AG04449 (cell line): ENCODE measurements at regions of chr19 and their contacts with region 1.

Region 1: DNA sequence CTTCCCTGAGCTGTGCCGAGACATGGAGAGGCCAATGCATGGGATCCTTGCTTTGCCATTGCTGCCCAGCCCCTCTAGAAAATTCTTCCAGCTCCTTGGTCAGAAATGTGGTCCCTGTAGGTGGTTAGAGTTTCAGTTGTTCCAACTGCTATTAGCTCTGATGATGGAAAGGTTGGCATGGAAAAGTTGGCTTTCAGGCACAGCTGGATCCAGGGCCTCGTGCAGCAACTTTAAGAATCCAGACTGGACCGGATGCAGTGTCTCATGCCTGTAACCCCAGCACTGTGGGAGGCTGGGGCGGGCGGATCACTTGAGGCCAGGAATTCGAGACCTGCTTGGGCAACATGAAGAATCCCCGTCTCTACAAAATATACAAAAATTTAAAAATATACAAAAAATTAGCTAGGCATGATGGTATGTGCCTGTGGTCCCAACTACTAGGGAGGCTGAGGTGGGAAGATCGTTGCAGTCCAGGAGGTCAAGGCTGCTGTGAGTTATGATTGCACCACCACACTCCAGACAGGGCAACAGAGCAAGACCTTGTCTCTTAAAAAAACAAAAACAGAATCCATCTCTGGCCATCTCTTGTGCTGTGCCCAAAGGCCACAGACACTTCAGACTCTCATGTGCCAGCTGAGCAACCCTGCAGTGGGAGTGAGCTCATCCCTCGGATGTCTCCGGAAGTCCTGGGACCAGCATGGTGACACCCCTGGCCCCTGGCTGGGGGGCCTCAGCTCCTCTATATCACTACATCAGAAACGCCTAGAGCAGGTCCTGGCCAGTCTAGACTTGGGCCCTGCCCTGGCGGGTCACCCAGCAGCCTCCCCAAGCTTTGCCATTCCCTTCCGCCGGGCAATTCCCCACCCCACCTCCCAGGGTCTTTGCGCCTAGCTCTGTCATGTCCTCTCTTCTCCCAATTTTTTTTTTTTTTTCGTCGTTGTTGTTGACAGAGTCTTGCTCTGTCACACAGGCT is 16.8 kb downstream of the MEX3D start:
- DNase-seq: no peak
- H3K4me3 ChIP-seq: no peak overlapping the region
- CTCF ChIP-seq: no peak

Region 2: GRCh38 chr19:1521636-1522035 is 29.7 kb before region 1 on chr19:
- CTCF ChIA-PET with region 1: interaction called, 15 read pairs
- POLR2A ChIA-PET with region 1: no interaction called
- DNase-seq: no peak
- H3K4me3 ChIP-seq: no peak overlapping the region
- CTCF ChIP-seq: no peak

Region 3: DNA sequence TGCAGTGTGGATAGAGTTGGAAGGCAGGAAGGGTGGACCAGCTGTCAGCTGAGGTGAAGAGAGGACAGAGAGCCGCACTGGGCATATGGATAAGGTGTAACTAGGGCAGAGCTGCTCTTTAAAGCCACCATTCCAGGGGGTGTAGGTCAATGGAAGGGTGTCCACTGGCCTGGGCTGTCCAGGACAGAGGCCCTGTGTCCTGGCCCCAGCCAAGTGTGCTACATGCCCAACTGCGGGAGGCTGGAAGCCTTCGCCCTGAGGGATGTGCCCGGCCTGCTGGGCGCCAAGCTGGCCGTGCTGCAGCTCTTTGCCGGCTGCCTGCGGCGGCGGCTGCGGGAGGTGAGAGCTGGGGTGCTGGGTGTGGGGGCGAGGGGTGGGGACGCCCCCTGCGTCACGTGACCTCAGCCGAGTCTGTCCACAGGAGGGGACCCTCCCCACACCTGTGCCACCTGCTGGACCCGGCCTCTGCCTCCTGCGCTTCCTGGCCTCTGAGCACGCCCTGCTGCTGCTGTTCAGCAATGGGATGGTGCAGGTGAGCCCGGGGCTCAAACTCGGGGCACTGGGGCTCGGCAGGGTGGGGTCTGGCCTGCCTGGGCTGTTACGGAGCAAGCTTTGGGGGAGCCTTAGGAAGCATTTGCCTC is 17.7 kb before region 1 on chr19:
- CTCF ChIA-PET with region 1: interaction called, 22 read pairs
- POLR2A ChIA-PET with region 1: no interaction called
- DNase-seq: no peak
- H3K4me3 ChIP-seq: no peak overlapping the region
- CTCF ChIP-seq: no peak

Region 4: DNA sequence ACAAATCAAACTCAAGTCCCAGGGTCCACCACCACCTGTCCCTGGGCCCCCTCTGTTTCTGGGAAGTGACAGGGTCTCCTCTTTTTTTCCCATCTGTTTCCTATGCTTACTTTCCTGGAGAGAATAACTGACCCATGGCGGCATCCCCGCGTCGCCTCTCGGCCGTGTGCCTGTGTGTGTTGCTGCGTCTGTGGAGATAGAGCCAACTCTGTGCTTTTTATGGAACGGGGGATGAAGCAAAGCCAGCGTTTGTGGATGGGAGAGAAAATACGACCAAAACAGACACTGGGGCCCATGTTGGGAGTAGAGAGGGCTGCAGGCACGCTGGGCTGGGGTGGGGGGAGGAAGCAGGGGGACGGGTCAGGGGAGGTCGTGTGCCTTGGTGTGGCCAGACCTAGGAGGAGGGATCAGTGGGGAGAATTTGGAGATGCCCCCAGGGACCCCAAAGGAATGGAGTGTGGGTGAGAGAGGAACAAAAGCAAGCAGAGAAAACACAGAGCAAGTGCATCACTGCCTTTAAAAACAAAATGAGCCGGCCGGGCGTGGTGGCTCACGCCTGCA is 10.9 kb before region 1 on chr19:
- CTCF ChIA-PET with region 1: interaction called, 22 read pairs
- POLR2A ChIA-PET with region 1: no interaction called
- DNase-seq: no peak
- H3K4me3 ChIP-seq: no peak overlapping the region
- CTCF ChIP-seq: no peak

Region 5: GRCh38 chr19:1568320-1569019 is 17.1 kb after region 1 on chr19 and contains the start of gene MEX3D:
- CTCF ChIA-PET with region 1: interaction called, 26 read pairs
- POLR2A ChIA-PET with region 1: no interaction called
- DNase-seq: no peak
- H3K4me3 ChIP-seq: peak within 1 kb of the TSS; percentile 78
- CTCF ChIP-seq: no peak